Activated B cell treated with CpG ODN at 0.5 μM for 24 hours (primary cell): ENCODE measurements at regions of chr1 and their contacts with region 1.

Region 1: DNA sequence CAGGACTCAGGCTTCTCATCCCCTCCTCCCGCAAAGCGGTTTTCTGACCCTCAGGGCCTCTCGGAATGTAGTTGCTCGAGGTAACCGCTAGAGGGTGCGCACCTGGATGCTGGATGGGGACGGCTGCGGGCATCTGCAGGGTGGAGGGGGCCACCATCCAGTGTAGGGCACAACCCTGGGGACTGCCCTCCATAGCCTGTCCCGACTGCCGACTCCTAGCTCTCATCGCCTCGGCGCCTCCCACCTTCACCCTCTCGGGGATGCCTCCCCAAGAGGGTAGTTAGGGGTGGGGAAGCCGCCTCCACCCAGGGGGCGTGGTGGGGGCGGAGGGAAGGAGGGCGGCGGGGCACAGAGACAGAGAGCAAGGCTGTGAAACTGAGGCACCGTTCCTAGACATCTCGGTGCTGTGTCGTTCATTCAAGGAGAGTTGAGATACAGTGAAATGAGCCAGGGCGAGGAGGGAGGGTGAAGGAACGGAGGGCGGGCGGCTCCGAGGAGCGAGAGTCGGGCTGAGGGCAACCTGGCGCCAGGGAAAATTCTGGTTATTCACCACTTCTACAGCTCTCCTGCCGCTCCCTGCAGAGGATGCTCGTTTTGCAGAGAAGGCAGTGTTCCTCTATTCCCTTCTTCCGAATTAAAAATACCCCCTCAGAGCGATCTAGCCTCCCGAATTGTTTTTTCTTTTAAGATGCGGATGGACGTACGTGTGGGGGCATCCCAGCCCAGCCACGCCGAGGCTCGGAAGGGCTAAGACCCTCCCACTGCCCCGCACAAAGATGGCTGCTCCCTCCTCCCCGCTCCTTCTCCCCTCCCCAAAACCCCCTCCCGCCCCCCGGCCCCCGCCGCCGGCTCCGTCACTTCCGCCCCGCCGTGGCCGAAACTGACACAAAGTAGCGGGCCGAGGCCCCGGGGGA is at the start of gene ATP8B2:
- DNase-seq: peak; percentile 74
- ATAC-seq: peak; percentile 67
- H3K4me3 Mint-ChIP-seq: peak within 1 kb of the TSS; percentile 95
- H3K27ac Mint-ChIP-seq: peak within 1 kb of the TSS; percentile 88
- H3K4me1 Mint-ChIP-seq: peaks cover 41% of the 10 kb centered on the region
- H3K27me3 Mint-ChIP-seq: peaks cover 17% of the 10 kb centered on the region
- CTCF ChIP-seq: peak; percentile 71
- total RNA-seq, gene ATP8B2: 24.3 and 27.3 TPM in 2 replicates

Region 2: GRCh38 chr1:154183045-154183915 is 141.6 kb before region 1 on chr1:
- CTCF ChIA-PET with region 1: no interaction called
- POLR2A ChIA-PET with region 1: no interaction called
- intact Hi-C with region 1: loop called (anchors 5 kb)
- DNase-seq: peak; percentile 93
- ATAC-seq: peak; percentile 76
- H3K4me3 Mint-ChIP-seq: peak overlapping the region; percentile 100
- H3K27ac Mint-ChIP-seq: peak overlapping the region; percentile 100
- H3K4me1 Mint-ChIP-seq: peaks cover 48% of the 10 kb centered on the region
- H3K27me3 Mint-ChIP-seq: peaks cover 2% of the 10 kb centered on the region
- CTCF ChIP-seq: no peak

Region 3: DNA sequence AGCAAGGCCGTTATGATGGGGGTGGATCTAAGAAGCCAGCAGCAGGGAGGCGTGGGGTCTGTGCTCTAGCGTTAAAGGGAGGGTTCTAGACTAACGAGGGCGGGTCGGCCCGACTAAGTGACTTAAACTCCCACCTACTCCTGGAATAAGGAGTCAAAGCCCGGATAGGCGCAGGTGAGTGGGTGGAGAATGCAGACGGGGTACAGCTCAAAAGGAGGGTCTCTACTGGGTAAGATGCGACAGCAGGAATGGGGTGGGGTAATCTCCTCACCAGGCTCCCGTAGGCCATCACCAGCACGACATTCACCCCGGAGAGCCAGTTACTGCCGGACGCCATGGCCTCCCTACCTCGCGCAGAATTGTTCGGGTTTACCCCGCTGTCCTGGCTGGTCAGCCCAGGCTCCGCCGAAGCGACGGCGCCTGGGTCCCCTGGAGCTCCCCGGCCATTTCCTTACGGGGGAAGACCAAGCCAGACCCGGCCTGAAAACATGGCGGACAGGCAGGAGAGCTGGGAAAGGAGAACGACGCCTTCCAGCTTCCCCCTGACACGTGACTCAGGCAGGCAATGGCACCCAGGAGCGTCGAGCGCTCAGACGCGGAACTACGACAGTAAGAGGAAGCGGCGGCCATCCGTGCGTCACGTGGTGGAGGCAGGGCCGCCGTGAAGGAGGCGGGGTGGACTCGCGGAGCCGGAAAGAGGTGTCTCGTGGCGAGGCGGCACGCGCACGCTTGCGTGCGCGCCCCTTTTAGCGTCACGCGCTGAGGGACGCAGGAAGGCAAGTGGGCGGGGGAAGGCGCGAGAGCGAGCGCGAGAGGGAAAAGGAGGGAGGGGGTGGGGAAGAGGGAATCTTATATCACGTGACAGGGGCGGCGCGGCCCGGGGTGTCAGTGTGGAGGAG is 104.6 kb before region 1 on chr1 and contains the start of gene UBAP2L:
- CTCF ChIA-PET with region 1: no interaction called
- POLR2A ChIA-PET with region 1: interaction called, 8 read pairs
- intact Hi-C with region 1: loop called (anchors 1 kb)
- DNase-seq: peak; percentile 98
- ATAC-seq: peak; percentile 84
- H3K4me3 Mint-ChIP-seq: peak within 1 kb of the TSS; percentile 99
- H3K27ac Mint-ChIP-seq: peak within 1 kb of the TSS; percentile 100
- H3K4me1 Mint-ChIP-seq: peaks cover 75% of the 10 kb centered on the region
- H3K27me3 Mint-ChIP-seq: no peaks in the 10 kb centered on the region
- CTCF ChIP-seq: no peak
- total RNA-seq, gene UBAP2L: 209 and 234 TPM in 2 replicates

Region 4: DNA sequence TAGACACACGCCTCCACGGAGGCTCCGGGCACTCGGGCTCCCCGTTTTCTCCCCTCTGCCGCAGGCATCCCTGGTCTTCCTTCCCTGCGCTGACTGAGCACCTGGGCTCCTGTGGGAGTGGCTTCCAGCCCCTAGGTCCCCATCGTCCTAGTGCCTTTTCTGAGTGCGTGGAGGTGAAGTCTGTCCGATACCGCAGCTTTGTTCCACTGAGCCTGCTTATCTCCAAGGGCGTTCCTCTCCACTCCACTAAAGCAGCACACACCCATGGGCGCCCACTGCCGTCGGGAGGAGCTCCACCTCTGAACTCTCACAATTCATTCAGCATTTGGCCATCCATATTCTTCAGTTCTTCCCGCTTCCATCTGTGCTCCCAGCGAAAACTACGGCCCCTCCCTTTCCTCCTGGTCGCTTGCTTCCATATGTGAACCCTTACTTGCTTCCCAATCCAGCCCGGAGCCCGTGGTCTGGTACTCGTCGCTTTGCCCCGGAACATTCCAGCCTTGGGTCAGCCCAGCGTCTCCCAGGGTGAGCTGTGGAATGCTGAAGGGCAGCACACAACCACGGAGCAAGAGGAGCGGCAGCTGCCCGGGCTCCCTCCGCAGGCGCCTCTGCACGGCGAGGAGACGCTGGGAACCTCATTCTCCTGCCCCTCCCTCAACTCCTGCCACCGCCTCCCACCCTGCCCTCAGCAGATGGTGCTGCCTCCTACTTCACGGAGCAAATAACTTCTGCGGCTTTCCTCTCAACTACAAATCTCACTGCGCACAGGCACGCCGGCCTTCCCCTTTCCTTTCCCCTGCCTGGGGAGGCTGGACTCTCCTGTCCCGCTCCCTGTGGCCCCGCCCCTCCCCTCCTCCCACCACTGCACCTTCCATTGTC is 27.9 kb after region 1 on chr1:
- CTCF ChIA-PET with region 1: interaction called, 3 read pairs
- POLR2A ChIA-PET with region 1: no interaction called
- intact Hi-C with region 1: loop called (anchors 2 kb)
- DNase-seq: peak; percentile 22
- ATAC-seq: peak; percentile 71
- H3K4me3 Mint-ChIP-seq: peak overlapping the region; percentile 80
- H3K27ac Mint-ChIP-seq: peak overlapping the region; percentile 41
- H3K4me1 Mint-ChIP-seq: peaks cover 18% of the 10 kb centered on the region
- H3K27me3 Mint-ChIP-seq: peaks cover 21% of the 10 kb centered on the region
- CTCF ChIP-seq: no peak

Region 5: GRCh38 chr1:154546264-154547063 is 221.5 kb after region 1 on chr1:
- CTCF ChIA-PET with region 1: interaction called, 3 read pairs
- POLR2A ChIA-PET with region 1: no interaction called
- intact Hi-C with region 1: loop called (anchors 1 kb)
- DNase-seq: peak; percentile 27
- ATAC-seq: peak; percentile 97
- H3K4me3 Mint-ChIP-seq: no peak overlapping the region
- H3K27ac Mint-ChIP-seq: no peak overlapping the region
- H3K4me1 Mint-ChIP-seq: peaks cover 5% of the 10 kb centered on the region
- H3K27me3 Mint-ChIP-seq: no peaks in the 10 kb centered on the region
- CTCF ChIP-seq: no peak